H1 (cell line): ENCODE measurements at regions of chr1 and their contacts with region 1.

Region 1: GRCh38 chr1:1310476-1311053 is 2.2 kb downstream of the PUSL1 start:
- DNase-seq: no peak
- H3K4me3 ChIP-seq: no peak overlapping the region
- H3K27ac ChIP-seq: no peak overlapping the region
- H3K4me1 ChIP-seq: peaks cover 0 to 35% (median 20%) of the 10 kb centered on the region in 4 experiments; a peak in 6 of 7 replicates
- H3K27me3 ChIP-seq: peaks cover 0 to 4% (median 1%) of the 10 kb centered on the region in 4 experiments; a peak in 1 of 7 replicates
- CTCF ChIP-seq: no peak
- EP300 ChIP-seq: no peak
- POLR2A ChIP-seq: no peak; a peak in 1 of 3 replicates
- RAD21 ChIP-seq: no peak

Region 2: DNA sequence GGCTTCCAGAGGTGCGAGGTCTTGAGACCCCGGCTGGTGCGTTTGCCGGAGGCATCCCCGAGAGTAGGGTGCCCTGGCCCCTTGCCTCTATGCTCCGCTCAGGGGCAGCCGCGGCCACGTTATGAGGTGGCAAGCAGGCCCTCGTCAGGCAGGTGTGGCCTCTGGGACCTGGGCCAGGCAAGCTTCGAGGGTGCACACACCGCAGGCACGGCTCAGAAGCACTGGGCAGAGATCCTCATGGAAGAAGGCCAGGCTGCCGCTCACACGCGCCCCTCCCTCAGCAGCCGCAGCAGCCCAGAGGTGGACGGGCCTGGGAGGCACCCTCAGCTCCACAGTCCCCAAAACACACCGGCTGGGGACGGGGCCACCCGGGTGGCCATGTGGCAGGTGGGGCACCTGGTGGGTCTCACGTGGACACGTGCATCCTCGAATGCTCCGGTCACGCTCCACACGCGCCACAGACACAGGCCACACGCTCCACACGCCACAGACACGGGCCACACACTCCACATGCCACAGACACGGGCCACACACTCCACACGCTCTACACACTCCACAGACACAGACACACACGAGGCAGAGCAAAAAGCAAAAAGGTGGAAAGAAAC is 85.2 kb before region 1 on chr1:
- CTCF ChIA-PET with region 1: no interaction called
- POLR2A ChIA-PET with region 1: no interaction called
- DNase-seq: no peak
- H3K4me3 ChIP-seq: no peak overlapping the region
- H3K27ac ChIP-seq: no peak overlapping the region
- H3K4me1 ChIP-seq: no peaks in the 10 kb centered on the region
- H3K27me3 ChIP-seq: no peaks in the 10 kb centered on the region
- CTCF ChIP-seq: no peak
- EP300 ChIP-seq: no peak
- POLR2A ChIP-seq: no peak
- RAD21 ChIP-seq: no peak

Region 3: DNA sequence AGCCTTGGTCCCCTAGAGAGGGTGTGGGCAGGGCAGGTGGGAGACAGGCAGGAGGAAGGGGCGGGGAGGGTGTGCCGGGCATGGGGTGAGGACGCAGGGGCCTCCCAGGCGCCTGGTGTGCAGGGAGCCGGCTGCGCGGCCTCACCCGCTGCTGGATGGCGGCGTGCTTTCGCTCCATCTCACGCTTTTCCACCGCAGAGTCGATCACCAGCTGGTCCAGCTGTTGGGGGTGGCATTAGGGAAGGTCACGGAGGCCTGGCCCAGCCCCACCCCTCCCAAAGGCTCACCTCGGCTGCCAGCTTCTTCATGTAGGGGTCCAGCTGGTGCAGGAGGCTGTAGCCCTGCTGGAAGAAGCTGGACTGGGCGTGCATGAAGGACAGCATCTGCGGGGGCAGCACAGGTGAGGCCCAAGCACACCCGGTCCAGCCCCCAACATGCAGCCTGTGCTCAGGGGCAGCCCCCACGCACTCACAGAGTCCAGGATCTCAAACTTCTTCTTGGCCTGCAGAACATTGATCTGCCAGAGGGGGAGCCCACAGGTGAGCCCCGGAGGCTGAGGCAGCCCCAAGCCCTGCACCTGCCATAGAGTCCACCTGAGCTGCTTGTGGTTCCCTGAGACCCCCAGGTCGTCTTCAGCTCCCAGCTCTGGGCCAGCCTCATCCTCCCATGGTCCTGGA is 10.7 kb before region 1 on chr1:
- CTCF ChIA-PET with region 1: interaction called, 8 read pairs
- POLR2A ChIA-PET with region 1: interaction called, 11 read pairs
- DNase-seq: no peak
- H3K4me3 ChIP-seq: no peak overlapping the region
- H3K27ac ChIP-seq: no peak overlapping the region
- H3K4me1 ChIP-seq: peaks cover 0 to 10% (median 6%) of the 10 kb centered on the region in 4 experiments; a peak in 5 of 7 replicates
- H3K27me3 ChIP-seq: no peaks in the 10 kb centered on the region
- CTCF ChIP-seq: peak in 2 of 3 experiments; percentile 56 to 72; a peak in 3 of 4 replicates
- EP300 ChIP-seq: no peak
- POLR2A ChIP-seq: no peak
- RAD21 ChIP-seq: peak; percentile 14 to 34; a peak in 2 of 4 replicates

Region 4: GRCh38 chr1:1324521-1325287 is 14.1 kb after region 1 on chr1 and contains the starts of genes CPTP and INTS11:
- CTCF ChIA-PET with region 1: interaction called, 3 read pairs
- POLR2A ChIA-PET with region 1: interaction called, 134 read pairs
- DNase-seq: peak in 1 of 2 experiments; percentile 94
- H3K4me3 ChIP-seq: peak within 1 kb of the TSS; percentile 60 to 100 (median 83)
- H3K27ac ChIP-seq: peak within 1 kb of the TSS; percentile 55; the same call in 1 of the 2 replicates
- H3K4me1 ChIP-seq: peaks cover 0 to 13% (median 3%) of the 10 kb centered on the region in 4 experiments; a peak in 5 of 7 replicates
- H3K27me3 ChIP-seq: no peaks in the 10 kb centered on the region; a peak in 1 of 7 replicates
- CTCF ChIP-seq: no peak
- EP300 ChIP-seq: no peak
- POLR2A ChIP-seq: peak in 1 of 2 experiments; percentile 74; a peak in 2 of 3 replicates
- RAD21 ChIP-seq: no peak
- total RNA-seq, gene CPTP: 10.6 and 13.3 TPM in 2 replicates
- total RNA-seq, gene INTS11: 113 and 116 TPM in 2 replicates